Panc1 (cell line): ENCODE measurements at regions of chr5 and their contacts with region 1.

Region 1: DNA sequence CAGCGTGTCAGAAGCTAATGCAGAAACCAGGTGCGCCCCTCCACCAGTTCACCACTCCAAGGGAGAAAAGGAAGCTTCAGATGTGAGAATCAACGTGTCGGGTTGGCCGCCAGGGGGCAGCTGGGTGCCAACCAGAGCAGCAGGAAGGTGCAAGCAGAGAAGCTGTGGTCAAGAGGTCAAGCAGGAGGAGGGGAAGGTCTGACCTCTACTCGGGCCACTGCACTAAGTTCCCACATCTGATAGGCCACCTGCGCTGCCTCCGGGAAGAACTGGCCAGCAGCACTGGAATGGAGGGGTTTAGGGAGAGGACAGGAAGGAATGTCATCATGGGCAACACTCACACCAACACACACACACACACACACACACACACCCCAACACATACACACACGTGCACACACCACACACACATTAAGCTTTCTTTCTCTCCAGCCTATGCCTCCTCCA is 31.4 kb downstream of the ANXA6 start:
- DNase-seq: peak; percentile 54
- ATAC-seq: peak; percentile 90
- H3K4me3 ChIP-seq: no peak overlapping the region
- H3K27ac ChIP-seq: no peak overlapping the region
- H3K4me1 ChIP-seq: no peaks in the 10 kb centered on the region
- H3K27me3 ChIP-seq: no peaks in the 10 kb centered on the region
- CTCF ChIP-seq: peak; percentile 87

Region 2: DNA sequence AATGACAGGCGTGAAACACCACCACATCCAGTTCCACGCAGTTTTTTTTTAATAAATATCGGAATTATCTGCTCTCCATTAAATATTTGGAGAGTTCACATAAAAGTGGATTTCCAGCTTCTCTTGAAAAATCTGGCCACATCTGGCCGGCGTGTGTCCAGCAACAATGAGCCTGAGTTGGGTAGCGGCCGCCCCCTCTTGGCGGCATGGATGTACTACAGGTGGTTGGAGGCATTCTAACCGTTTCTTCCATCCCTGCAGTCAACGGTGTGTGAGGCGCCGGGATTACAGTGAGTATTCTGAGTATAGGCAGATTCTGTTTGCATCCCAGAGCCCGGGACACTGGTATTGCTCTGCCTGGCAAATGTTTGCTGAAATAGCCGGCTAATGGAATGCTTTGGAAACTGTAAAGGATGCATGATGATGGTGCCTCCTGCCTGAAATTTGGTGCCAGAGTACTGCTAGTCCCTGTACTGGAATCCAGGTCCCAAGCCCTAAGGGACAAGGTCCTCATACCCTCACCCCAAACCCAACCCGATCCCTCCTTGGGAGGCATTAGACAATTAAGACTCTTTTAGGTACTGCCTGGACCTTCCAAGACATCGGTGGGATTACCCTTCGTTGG is 113.1 kb after region 1 on chr5:
- CTCF ChIA-PET with region 1: interaction called, 3 read pairs
- POLR2A ChIA-PET with region 1: interaction called, 7 read pairs
- in situ Hi-C with region 1: no loop called
- intact Hi-C with region 1: loop called (anchors 2 kb)
- DNase-seq: no peak
- ATAC-seq: peak; percentile 86
- H3K4me3 ChIP-seq: no peak overlapping the region
- H3K27ac ChIP-seq: no peak overlapping the region
- H3K4me1 ChIP-seq: no peaks in the 10 kb centered on the region
- H3K27me3 ChIP-seq: no peaks in the 10 kb centered on the region
- CTCF ChIP-seq: peak; percentile 84

Region 3: DNA sequence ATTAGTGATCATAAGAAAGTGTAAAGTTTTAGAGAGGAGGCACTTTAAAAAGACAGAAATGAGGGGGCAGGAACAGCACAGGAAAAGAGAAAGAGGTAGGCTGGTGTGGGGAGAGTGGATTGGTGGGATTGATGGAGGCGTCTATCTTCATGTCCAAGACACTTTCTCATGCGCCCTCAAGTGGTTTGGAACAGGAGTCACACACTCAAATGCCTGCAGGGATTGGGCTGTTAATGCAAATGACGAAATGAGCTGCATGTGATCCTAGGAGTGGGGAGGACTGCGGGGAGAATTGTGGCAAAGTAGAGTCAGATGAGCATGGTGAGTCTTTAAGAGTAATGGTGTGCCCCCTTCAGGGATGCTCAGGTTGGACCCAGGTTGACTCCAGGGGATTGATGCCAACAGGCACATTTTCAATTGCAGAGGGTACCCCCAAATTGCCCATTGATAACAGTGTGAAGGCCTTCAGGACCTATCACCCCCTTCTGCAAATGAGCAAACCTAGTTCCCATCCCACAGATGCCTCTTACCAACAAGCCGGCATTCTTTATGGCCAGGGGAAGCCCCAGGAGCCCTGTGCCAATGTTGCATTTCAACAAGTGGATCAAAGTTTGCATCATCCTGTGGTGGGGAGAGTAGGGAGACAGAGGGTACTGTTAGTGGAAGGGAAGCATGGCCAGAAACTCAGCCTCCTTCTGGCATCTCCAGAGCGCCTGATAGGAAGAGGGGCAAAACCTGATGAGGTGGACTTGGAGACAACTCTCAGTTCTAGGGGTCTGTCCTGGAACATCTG is 172.0 kb after region 1 on chr5:
- CTCF ChIA-PET with region 1: no interaction called
- POLR2A ChIA-PET with region 1: no interaction called
- in situ Hi-C with region 1: no loop called
- intact Hi-C with region 1: loop called (anchors 10 kb)
- DNase-seq: peak; percentile 41
- ATAC-seq: peak; percentile 90
- H3K4me3 ChIP-seq: no peak overlapping the region
- H3K27ac ChIP-seq: no peak overlapping the region
- H3K4me1 ChIP-seq: peaks cover 2% of the 10 kb centered on the region; the same call in 1 of the 2 replicates
- H3K27me3 ChIP-seq: peaks cover 10% of the 10 kb centered on the region
- CTCF ChIP-seq: peak; percentile 76